CD8-positive, alpha-beta T cell (primary cell): ENCODE measurements at regions of chr10 and their contacts with region 1.

Region 1: DNA sequence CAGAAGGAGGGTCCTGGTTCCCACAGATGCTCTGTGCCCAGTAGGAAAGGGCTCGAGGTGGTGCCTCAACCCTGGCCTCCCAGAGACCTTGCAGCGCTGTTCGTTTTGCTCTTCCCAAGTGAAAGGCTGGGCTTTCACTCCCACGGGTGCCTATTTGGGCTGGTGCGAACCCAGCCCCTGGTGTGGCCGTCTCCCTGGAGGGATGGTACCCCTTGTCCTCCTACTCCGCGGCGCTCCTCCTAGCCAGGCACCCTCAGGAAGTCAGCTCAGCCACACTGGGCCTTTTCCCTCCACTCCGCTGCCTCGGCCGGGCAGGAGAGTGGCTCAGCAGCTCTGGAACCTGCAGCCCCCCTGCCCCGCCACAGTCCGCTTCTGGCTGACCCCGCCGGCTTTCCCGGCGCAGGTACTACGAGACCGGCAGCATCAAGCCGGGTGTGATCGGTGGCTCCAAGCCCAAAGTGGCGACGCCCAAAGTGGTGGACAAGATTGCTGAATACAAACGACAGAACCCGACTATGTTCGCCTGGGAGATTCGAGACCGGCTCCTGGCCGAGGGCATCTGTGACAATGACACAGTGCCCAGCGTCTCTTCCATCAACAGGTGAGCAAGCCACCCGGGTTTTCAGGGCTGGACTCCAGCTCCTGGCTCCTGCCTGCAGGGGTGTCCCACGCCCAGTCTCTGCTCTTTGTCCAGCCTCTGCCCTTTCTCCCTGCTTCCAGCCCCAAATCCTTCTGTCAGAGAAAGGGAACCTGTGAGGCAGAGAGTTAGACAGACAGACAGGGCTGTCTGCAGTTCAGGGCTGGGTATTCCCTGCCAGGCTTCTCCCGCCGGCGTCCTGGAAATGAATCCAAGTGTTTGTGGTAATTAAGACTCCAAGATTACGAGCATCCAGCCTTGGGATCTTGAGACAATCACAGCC is 5.2 kb downstream of the PAX2 start:
- DNase-seq: no peak
- ATAC-seq: no peak
- H3K4me3 ChIP-seq: no peak overlapping the region
- H3K4me3 Mint-ChIP-seq: no peak overlapping the region
- H3K27ac ChIP-seq: no peak overlapping the region
- H3K27ac Mint-ChIP-seq: no peak overlapping the region
- H3K4me1 ChIP-seq: peaks cover 40% of the 10 kb centered on the region
- H3K4me1 Mint-ChIP-seq: peaks cover 25% of the 10 kb centered on the region
- H3K27me3 ChIP-seq: peaks cover 13 to 46% of the 10 kb centered on the region in 2 experiments
- H3K27me3 Mint-ChIP-seq: peaks cover 73% of the 10 kb centered on the region
- CTCF ChIP-seq: no peak

Region 2: DNA sequence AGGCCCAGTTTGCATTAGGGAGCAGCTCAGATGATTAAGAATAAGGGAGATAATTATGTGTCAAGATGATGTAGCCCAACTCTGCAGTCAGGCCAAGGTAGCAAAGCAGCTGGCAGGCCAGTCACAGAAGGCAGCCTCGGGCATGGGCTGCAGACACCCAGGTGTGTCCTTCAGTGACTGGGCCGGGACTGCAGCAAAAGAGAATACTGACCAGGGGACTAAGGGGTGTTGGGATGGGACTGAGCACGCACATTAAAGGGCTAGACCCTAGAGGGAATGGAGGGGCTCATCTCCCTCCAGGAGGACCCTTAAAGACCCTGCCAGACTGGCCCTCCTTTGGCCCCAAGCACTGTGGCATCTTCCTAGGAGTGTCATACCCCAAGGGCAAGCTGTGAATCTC is 33.6 kb after region 1 on chr10:
- CTCF ChIA-PET with region 1: no interaction called
- POLR2A ChIA-PET with region 1: no interaction called
- intact Hi-C with region 1: loop called in 1 of 2 experiments (anchors 1 kb)
- DNase-seq: no peak
- ATAC-seq: no peak
- H3K4me3 ChIP-seq: no peak overlapping the region
- H3K4me3 Mint-ChIP-seq: no peak overlapping the region
- H3K27ac ChIP-seq: no peak overlapping the region
- H3K27ac Mint-ChIP-seq: no peak overlapping the region
- H3K4me1 ChIP-seq: no peaks in the 10 kb centered on the region
- H3K4me1 Mint-ChIP-seq: no peaks in the 10 kb centered on the region
- H3K27me3 ChIP-seq: peaks cover 0 to 5% of the 10 kb centered on the region in 2 experiments
- H3K27me3 Mint-ChIP-seq: peaks cover 22% of the 10 kb centered on the region
- CTCF ChIP-seq: no peak

Region 3: DNA sequence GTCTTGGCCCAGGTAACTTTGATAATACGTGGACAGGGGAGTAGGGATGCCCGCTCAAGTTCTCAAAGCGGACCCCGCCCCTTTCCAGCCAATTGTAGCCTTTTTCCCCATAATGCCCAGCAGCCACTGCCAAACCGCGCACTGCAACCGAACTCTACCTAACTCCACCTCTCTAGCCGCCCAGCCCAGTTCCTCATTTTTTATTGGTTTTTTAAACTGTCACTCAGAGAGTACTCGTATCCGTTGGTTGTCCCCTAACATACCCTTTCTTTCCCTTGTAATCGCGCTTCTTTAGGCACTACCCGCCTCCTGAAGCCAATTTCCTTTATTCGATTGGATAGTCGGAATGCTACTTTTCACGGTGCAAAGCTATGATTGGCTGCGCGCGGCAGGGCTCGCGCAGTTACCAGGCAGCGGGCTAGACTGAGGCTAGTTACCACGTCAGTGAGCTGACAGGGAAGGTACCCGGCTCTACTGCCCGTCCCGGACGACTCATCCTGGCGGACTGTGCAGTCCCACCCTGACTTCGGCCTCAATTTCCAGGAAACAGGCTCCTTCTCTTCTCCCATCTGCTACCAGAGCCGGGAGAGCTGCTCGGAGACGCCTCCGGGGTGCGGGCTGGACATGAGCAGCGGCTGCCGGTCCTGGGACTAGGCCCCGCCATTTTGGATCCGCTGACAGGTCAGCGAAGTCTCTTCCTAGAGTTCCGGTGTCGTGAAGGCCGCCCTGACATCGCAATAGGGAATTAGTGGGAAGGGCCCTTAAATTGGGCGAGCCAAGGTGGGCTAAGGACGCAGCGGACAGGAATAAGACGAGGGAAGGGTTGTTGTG is 1494.8 kb after region 1 on chr10 and contains the start of gene GBF1:
- CTCF ChIA-PET with region 1: no interaction called
- POLR2A ChIA-PET with region 1: no interaction called
- intact Hi-C with region 1: no loop called
- DNase-seq: peak; percentile 75 to 98 (median 87)
- ATAC-seq: peak; percentile 84
- H3K4me3 ChIP-seq: peak within 1 kb of the TSS; percentile 82 to 95
- H3K4me3 Mint-ChIP-seq: peak within 1 kb of the TSS; percentile 94
- H3K27ac ChIP-seq: peak within 1 kb of the TSS; percentile 89 to 93
- H3K27ac Mint-ChIP-seq: peak within 1 kb of the TSS; percentile 92
- H3K4me1 ChIP-seq: peaks cover 44% of the 10 kb centered on the region
- H3K4me1 Mint-ChIP-seq: peaks cover 54% of the 10 kb centered on the region
- H3K27me3 ChIP-seq: peaks cover 10 to 22% of the 10 kb centered on the region in 2 experiments
- H3K27me3 Mint-ChIP-seq: peaks cover 19% of the 10 kb centered on the region
- CTCF ChIP-seq: no peak
- total RNA-seq, gene GBF1: 26.7 to 31.3 TPM